HepG2 (cell line): ENCODE measurements at regions of chr18 and their contacts with region 1.

Region 1: GRCh38 chr18:7021994-7022840 is 95.4 kb downstream of the LAMA1 start:
- DNase-seq: peak; percentile 76
- ATAC-seq: peak; percentile 95
- H3K4me3 ChIP-seq: no peak overlapping the region
- H3K27ac ChIP-seq: no peak overlapping the region
- H3K4me1 ChIP-seq: no peaks in the 10 kb centered on the region
- H3K27me3 ChIP-seq: no peaks in the 10 kb centered on the region; a peak in 1 of 5 replicates
- CTCF ChIP-seq: peak; percentile 75
- EP300 ChIP-seq: no peak
- POLR2A ChIP-seq: no peak
- RAD21 ChIP-seq: peak; percentile 81

Region 2: DNA sequence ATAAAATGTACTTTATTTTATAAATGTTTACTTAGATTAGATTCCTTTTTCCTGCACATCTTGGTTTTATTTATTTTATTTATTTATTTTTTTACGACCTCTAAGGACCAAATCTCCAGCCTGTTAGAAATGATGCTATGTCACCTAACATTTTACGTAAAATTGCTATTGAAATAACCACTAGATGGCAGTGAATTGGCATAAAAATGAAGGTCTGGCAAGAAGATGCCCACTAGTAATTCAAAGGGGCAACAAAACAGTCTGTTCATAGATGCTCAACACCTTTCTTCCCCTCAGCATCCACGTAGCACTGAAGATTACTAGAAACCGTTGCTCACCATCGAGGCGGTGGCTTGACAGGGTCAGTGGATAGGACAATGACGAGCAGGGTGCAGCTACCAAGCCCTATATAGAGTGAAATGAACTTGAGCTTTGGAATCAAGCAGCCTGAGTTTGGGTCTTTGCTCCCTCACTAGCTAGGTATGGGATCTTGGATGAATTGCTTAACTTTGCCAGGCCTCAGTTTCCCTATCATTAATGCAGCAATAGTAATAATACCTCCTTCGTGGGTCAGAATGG is 478.8 kb before region 1 on chr18:
- CTCF ChIA-PET with region 1: no interaction called
- POLR2A ChIA-PET with region 1: no interaction called
- in situ Hi-C with region 1: no loop called
- intact Hi-C with region 1: loop called (anchors 5 kb)
- DNase-seq: peak; percentile 14
- ATAC-seq: no peak
- H3K4me3 ChIP-seq: no peak overlapping the region
- H3K27ac ChIP-seq: no peak overlapping the region
- H3K4me1 ChIP-seq: no peaks in the 10 kb centered on the region; the same call in 1 of the 2 replicates
- H3K27me3 ChIP-seq: no peaks in the 10 kb centered on the region
- CTCF ChIP-seq: peak; percentile 57
- EP300 ChIP-seq: no peak
- POLR2A ChIP-seq: no peak
- RAD21 ChIP-seq: no peak

Region 3: DNA sequence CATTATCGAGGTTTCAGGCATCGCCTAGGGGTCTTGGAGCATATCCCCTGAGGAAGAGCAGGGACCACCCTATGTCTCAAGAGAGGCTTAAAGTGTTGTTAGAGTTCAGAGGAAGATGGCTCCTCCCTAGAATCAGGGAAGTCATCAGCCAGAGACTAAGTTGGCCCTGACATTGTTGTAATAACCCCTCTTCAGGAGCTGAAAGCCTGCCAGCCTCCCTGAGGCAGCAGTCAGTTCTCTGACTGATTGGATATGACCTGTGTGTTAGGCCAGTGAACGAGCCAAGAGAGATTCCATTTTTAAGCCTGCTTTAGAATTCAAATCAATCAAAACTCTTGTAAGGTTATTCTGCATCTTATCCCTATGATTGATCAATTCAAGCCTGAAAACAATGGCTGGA is 257.8 kb before region 1 on chr18:
- CTCF ChIA-PET with region 1: no interaction called
- POLR2A ChIA-PET with region 1: no interaction called
- in situ Hi-C with region 1: no loop called
- intact Hi-C with region 1: no loop called
- DNase-seq: no peak
- ATAC-seq: no peak
- H3K4me3 ChIP-seq: no peak overlapping the region
- H3K27ac ChIP-seq: no peak overlapping the region
- H3K4me1 ChIP-seq: no peaks in the 10 kb centered on the region
- H3K27me3 ChIP-seq: no peaks in the 10 kb centered on the region
- CTCF ChIP-seq: no peak
- EP300 ChIP-seq: no peak
- POLR2A ChIP-seq: no peak
- RAD21 ChIP-seq: no peak

Region 4: GRCh38 chr18:6976935-6977334 is 45.3 kb before region 1 on chr18:
- CTCF ChIA-PET with region 1: no interaction called
- POLR2A ChIA-PET with region 1: no interaction called
- in situ Hi-C with region 1: no loop called
- intact Hi-C with region 1: no loop called
- DNase-seq: no peak
- ATAC-seq: no peak
- H3K4me3 ChIP-seq: no peak overlapping the region
- H3K27ac ChIP-seq: no peak overlapping the region
- H3K4me1 ChIP-seq: no peaks in the 10 kb centered on the region
- H3K27me3 ChIP-seq: no peaks in the 10 kb centered on the region; a peak in 1 of 5 replicates
- CTCF ChIP-seq: no peak
- EP300 ChIP-seq: no peak
- POLR2A ChIP-seq: no peak
- RAD21 ChIP-seq: no peak

Region 5: GRCh38 chr18:7038330-7038851 is 16.2 kb after region 1 on chr18:
- CTCF ChIA-PET with region 1: no interaction called
- POLR2A ChIA-PET with region 1: no interaction called
- in situ Hi-C with region 1: no loop called
- intact Hi-C with region 1: no loop called
- DNase-seq: peak; percentile 27
- ATAC-seq: peak; percentile 89
- H3K4me3 ChIP-seq: no peak overlapping the region
- H3K27ac ChIP-seq: no peak overlapping the region
- H3K4me1 ChIP-seq: peaks cover 12% of the 10 kb centered on the region
- H3K27me3 ChIP-seq: peaks cover 0 to 3% of the 10 kb centered on the region in 2 experiments; a peak in 1 of 5 replicates
- CTCF ChIP-seq: peak; percentile 69
- EP300 ChIP-seq: no peak
- POLR2A ChIP-seq: no peak
- RAD21 ChIP-seq: no peak; the same call in 1 of the 2 replicates

Region 6: DNA sequence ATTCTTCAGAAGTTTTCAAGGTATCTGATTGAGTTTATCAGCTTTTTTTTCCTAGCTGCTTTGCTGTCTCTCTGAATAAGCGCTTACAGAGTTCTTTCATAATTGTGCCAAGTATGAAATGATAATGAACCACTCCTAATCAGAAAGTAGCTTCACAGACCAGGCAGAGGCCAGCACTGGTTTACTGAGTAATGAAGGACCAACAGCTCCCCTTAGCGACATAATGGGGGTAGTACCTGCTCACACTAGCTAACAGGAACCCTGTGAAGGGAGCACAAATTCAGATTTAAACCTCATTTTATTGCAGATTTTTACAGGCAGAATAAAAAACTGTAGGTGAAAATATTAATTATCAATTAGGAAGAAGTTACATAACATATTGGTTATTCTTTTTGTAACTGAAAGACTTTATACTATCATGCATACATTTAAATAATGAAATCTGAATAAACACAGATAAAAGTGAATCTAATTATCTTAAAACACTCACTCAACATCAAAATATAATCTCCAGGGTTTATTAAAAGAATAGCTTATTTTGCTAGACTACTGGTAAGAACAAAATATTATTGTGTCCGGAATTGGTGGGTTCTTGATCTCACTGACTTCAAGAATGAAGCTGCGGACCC is 155.0 kb after region 1 on chr18:
- CTCF ChIA-PET with region 1: no interaction called
- POLR2A ChIA-PET with region 1: no interaction called
- in situ Hi-C with region 1: loop called (anchors 25 kb)
- intact Hi-C with region 1: loop called (anchors 1 kb)
- DNase-seq: peak; percentile 45
- ATAC-seq: peak; percentile 95
- H3K4me3 ChIP-seq: no peak overlapping the region
- H3K27ac ChIP-seq: no peak overlapping the region
- H3K4me1 ChIP-seq: no peaks in the 10 kb centered on the region
- H3K27me3 ChIP-seq: peaks cover 0 to 4% of the 10 kb centered on the region in 2 experiments; a peak in 1 of 5 replicates
- CTCF ChIP-seq: peak; percentile 75
- EP300 ChIP-seq: no peak
- POLR2A ChIP-seq: no peak
- RAD21 ChIP-seq: 0 out of 2 replicates have a peak, but pooled peaks have one; percentile 23